Activated T-helper 1 cell treated with anti-CD3 and anti-CD28 coated beads, Interleukin-12 subunit alpha, Interleukin-12 subunit beta, Interleukin-2, Interleukin-4 antibody, amounts not matched to agents 30 ng/mL and 10 ng/mL and 1 ng/mL, durations not matched to agents 14 hours and 24 hours and 36 hours (primary cell): ENCODE measurements at regions of chr6 and their contacts with region 1.

Region 1: DNA sequence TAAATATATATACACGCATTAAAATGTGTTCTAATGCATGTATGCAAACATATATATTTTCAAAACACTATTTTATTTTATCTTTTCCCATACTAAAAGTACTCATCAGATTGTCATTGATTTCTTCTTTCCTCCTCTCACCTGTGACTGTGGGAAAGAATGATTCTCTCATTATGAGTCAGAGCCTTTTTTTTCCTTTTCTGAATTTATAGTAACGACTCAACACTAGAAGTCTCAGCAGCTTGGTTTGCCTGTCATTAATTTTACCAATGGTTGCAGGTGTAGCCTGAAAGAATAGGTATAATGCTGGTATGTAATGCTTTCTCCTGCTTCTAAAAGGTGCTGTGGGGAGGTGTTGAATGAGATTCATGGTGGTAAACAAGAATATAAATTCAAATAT is 328.7 kb downstream of the UTRN start:
- DNase-seq: no peak
- H3K4me3 Mint-ChIP-seq: no peak overlapping the region
- H3K27ac Mint-ChIP-seq: no peak overlapping the region
- H3K4me1 Mint-ChIP-seq: peaks cover 31% of the 10 kb centered on the region
- H3K27me3 Mint-ChIP-seq: peaks cover 3% of the 10 kb centered on the region

Region 2: DNA sequence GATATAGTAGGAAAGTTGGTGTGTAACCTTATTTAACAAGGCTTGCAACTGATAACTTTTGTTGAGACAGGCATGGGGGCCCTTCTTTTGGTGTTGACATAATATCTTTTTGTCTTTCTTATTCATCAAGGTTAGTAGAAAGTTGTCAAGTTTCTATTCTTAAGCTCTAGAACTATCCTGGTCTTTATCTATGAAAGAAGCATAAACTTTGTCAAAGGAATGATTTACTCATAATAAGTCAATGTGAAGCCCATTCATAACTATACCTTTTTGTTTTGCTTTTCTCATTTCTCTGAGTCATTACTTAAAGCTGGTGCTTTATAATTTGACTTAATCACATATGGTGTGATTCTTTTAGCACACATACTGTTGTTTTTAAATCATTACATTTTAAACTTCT is 16.3 kb before region 1 on chr6:
- intact Hi-C with region 1: loop called (anchors 1 kb)
- DNase-seq: no peak
- H3K4me3 Mint-ChIP-seq: no peak overlapping the region
- H3K27ac Mint-ChIP-seq: peak overlapping the region; percentile 0
- H3K4me1 Mint-ChIP-seq: peaks cover 56% of the 10 kb centered on the region
- H3K27me3 Mint-ChIP-seq: no peaks in the 10 kb centered on the region